Heart right ventricle (tissue), 16 donors: ENCODE measurements at regions of chr7 and their contacts with region 1.

Region 1: GRCh38 chr7:37352974-37353948 is 95.4 kb downstream of the ELMO1 start:
- DNase-seq: no peak
- ATAC-seq: peak in 5 of 8 donors; percentile 4 to 52 (median 30)
- H3K4me3 ChIP-seq: peak overlapping the region in 3 of 10 donors; percentile 5 to 52 (median 18)
- H3K27ac ChIP-seq: peak overlapping the region; percentile 41 to 86 (median 75)
- H3K4me1 ChIP-seq: peaks cover 9 to 87% (median 68%) of the 10 kb centered on the region in 9 donors
- H3K27me3 ChIP-seq: no peaks in the 10 kb centered on the region
- CTCF ChIP-seq: peak in 3 of 9 donors; percentile 23 to 51 (median 27)

Region 2: GRCh38 chr7:37061849-37062559 is 291.3 kb before region 1 on chr7:
- intact Hi-C with region 1: no loop called
- DNase-seq: no peak
- ATAC-seq: no peak
- H3K4me3 ChIP-seq: no peak overlapping the region
- H3K27ac ChIP-seq: no peak overlapping the region
- H3K4me1 ChIP-seq: peaks cover 0 to 4% (median 0%) of the 10 kb centered on the region in 9 donors
- H3K27me3 ChIP-seq: no peaks in the 10 kb centered on the region
- CTCF ChIP-seq: no peak

Region 3: DNA sequence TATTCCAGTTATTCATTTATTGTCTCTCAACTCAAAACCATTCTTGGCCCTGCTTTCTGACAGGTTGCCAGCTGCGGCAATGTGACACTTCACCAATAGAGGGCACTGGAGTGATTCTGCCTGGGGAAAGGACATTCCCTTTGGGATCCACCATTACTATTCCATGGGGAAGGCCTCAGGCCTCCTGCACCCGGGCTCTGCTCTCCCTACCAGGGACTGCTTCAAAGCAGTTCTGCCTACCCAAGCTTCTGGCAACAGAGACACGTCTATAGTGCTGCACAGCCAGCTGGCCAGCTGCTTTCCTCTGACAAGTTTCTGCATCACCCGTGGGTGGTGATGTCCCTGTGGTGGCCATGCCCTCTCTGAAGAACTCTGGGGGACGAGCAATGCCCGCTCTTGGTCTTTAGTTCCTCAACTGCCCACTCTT is 68.4 kb before region 1 on chr7:
- intact Hi-C with region 1: loop called in 1 of 10 experiments (anchors 5 kb)
- DNase-seq: peak; percentile 54 to 61
- ATAC-seq: peak in 6 of 8 donors; percentile 14 to 67 (median 52)
- H3K4me3 ChIP-seq: no peak overlapping the region
- H3K27ac ChIP-seq: peak overlapping the region in 7 of 10 donors; percentile 13 to 45 (median 19)
- H3K4me1 ChIP-seq: peaks cover 4 to 78% (median 56%) of the 10 kb centered on the region in 9 donors
- H3K27me3 ChIP-seq: no peaks in the 10 kb centered on the region
- CTCF ChIP-seq: peak; percentile 59 to 84 (median 77)

Region 4: DNA sequence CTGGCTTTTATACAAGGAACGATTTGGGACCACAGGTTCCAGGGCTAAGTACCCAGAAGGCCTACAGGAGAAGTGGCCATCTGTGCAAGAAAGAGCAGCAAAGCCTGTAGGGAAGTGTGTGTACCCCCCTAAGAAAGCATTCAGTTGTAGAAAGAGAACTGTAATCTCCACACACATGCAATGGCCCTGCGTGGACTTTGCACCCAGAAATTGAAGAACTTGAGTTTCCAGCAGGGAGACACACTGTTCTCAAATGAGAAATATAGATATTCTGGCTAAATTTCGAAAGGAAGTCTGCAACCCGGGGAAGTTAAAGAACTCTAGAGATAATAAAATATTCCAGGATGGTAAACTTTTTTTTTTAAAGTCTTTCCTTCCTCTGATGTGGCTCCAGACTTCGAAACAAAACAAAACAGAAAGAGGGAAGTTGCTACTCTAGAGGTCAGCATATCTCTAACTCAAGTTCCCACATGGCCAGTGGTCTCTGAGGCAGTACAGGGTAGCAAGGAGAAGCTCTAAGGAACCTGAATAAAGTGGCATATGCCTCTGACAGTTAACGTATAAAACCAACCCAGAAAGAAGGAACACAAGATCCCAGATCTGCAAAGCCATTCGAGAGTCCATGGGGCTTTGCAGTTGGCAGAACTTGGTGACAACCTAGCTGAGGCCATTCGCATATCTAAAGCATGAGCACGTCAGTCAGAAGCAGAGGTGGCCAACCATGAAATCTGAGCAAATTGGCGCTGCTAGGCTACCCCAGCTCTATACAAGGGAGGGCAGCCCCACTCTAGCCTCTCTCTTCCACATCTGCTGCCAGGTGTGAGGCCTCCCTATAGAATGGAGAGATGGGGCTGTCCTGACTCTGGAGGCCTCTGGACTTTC is 38.8 kb after region 1 on chr7:
- intact Hi-C with region 1: loop called in 1 of 10 experiments (anchors 5 kb)
- DNase-seq: no peak
- ATAC-seq: peak in 6 of 8 donors; percentile 52 to 73 (median 64)
- H3K4me3 ChIP-seq: no peak overlapping the region
- H3K27ac ChIP-seq: peak overlapping the region in 6 of 10 donors; percentile 1 to 80 (median 54)
- H3K4me1 ChIP-seq: peaks cover 5 to 49% (median 31%) of the 10 kb centered on the region in 9 donors
- H3K27me3 ChIP-seq: no peaks in the 10 kb centered on the region
- CTCF ChIP-seq: no peak

Region 5: DNA sequence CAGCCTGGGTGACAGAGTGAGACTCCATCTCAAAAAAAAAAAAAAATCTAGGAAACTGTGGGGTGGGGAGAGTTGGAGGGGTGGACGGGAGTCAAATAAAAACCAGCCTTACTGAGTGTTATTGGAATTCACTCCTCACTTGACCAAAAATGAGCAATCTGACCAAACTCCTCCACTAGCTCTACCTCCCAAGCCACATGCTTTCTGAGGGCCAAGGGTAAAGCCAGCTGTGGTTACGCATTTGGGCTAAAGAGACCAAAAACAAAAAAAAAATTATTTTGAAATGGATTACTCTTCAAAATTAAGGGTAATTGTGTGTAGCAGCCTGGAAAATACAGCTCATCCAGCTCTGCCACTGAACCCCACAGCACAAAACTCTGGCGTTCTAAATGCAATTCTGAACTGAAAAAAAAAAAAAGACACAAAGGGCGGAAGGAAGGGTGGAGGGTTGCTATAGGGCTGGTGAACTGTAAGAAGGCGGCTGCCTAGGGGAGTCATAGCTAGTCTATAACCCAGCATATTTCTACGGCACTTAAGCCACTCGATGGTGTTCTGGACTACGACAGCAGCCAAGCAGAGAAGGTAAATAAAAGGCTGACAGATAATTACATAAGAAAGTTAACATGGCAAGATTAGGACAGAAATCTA is 87.6 kb after region 1 on chr7:
- intact Hi-C with region 1: loop called in 6 of 10 experiments (anchors 2 to 10 kb)
- DNase-seq: peak in 1 of 2 donors; percentile 41
- ATAC-seq: peak; percentile 76 to 93 (median 90)
- H3K4me3 ChIP-seq: peak overlapping the region in 4 of 10 donors; percentile 2 to 20 (median 12)
- H3K27ac ChIP-seq: peak overlapping the region; percentile 72 to 93 (median 78)
- H3K4me1 ChIP-seq: peaks cover 2 to 74% (median 52%) of the 10 kb centered on the region in 9 donors
- H3K27me3 ChIP-seq: peaks cover 0 to under 1% (median 0%) of the 10 kb centered on the region in 7 donors
- CTCF ChIP-seq: no peak

Region 6: DNA sequence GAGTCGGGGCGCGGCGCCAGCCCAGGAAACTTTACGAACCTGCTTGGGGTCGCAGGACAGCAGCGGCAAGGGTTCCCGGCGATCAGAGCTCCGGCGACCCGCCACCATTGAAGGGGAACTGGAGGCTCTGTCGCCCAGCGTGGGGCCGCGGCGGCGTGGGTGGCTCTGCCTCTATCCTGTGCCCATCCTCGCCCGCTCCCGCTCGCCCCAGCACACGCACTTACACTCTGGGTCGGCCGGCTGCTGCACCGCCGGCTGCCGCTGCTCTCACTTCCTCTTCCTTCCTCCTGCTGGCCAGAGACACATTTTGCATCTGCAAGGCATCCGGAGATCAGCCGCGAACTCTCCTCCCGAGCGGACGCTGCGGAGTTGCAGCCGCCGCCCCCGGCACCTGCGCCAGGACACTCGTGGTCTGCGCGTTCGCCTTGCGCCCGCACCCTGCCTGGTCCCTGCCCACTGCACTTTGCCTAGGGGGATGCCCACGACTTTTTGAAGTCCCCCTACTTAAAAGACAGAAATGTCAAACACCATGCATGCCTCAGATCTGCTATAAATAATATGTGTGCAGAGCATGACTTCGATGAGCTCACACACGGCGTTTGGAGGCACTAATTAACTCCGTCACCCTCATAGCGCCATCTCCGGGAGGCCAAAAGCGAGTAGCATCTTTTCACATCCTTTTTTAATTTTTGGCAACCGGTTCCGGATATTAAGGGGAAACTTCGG is 95.5 kb after region 1 on chr7 and contains the start of gene ELMO1:
- intact Hi-C with region 1: loop called in 6 of 10 experiments (anchors 2 to 10 kb)
- DNase-seq: peak; percentile 76 to 79
- ATAC-seq: peak; percentile 77 to 89 (median 85)
- H3K4me3 ChIP-seq: peak within 1 kb of the TSS; percentile 59 to 86 (median 78)
- H3K27ac ChIP-seq: peak within 1 kb of the TSS; percentile 82 to 98 (median 94)
- H3K4me1 ChIP-seq: peaks cover 0 to 47% (median 20%) of the 10 kb centered on the region in 9 donors
- H3K27me3 ChIP-seq: peaks cover 0 to 22% (median 0%) of the 10 kb centered on the region in 7 donors
- CTCF ChIP-seq: peak in 8 of 9 donors; percentile 20 to 63 (median 51)
- total RNA-seq, gene ELMO1: 8.8 to 18.0 (median 14.0) TPM

Region 7: DNA sequence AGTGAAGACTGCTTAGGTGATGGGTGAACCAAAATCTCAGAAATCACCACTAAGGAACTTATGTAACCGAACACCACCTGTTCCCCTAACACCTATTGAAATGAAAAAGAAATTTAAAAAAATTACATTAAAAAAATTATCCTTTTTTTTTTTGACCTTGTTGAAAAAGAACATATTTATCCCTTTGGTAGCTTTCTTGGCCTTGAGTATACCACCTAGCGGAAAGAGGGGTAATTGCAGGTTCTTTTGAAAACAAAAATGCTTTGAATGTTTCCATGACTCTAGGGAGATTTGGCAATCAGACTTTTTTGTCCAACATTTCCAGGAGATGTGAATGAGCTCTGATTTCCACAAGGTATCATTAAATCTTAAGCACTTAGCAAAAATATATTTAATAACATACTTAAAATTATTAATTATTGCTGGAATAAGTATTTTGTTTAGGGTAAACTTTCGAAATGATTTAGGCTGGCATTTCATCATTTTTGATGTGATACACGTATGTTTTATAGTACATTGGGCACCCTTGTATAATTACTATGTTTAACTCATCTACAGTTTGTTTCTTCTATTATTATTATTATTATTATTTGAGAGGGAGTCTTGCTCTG is 142.4 kb after region 1 on chr7:
- intact Hi-C with region 1: loop called in 1 of 10 experiments (anchors 5 kb)
- DNase-seq: no peak
- ATAC-seq: peak in 1 of 8 donors; percentile 37
- H3K4me3 ChIP-seq: no peak overlapping the region
- H3K27ac ChIP-seq: no peak overlapping the region
- H3K4me1 ChIP-seq: no peaks in the 10 kb centered on the region
- H3K27me3 ChIP-seq: no peaks in the 10 kb centered on the region
- CTCF ChIP-seq: peak; percentile 72 to 86 (median 78)